BJ (cell line): ENCODE measurements at regions of chr16 and their contacts with region 1.

Region 1: GRCh38 chr16:88672776-88673175 is 9.9 kb upstream of the MVD start:
- DNase-seq: no peak
- H3K4me3 ChIP-seq: no peak overlapping the region
- H3K27me3 ChIP-seq: no peaks in the 10 kb centered on the region
- CTCF ChIP-seq: peak; percentile 19; the same call in 1 of the 2 replicates

Region 2: GRCh38 chr16:88686439-88687253 is 13.9 kb after region 1 on chr16 and contains the start of gene SNAI3:
- CTCF ChIA-PET with region 1: interaction called, 10 read pairs
- POLR2A ChIA-PET with region 1: no interaction called
- DNase-seq: no peak
- H3K4me3 ChIP-seq: peak within 1 kb of the TSS; percentile 47
- H3K27me3 ChIP-seq: peaks cover 14% of the 10 kb centered on the region
- CTCF ChIP-seq: no peak
- polyA plus RNA-seq, gene SNAI3: not detected in 2 replicates